Naive thymus-derived CD4-positive, alpha-beta T cell (primary cell): ENCODE measurements at regions of chr7 and their contacts with region 1.

Region 1: GRCh38 chr7:63008366-63008765 is 990.3 kb upstream of the ZNF722 start:
- DNase-seq: no peak
- ATAC-seq: no peak
- H3K4me3 ChIP-seq: no peak overlapping the region
- H3K4me3 Mint-ChIP-seq: no peak overlapping the region
- H3K27ac ChIP-seq: no peak overlapping the region
- H3K27ac Mint-ChIP-seq: no peak overlapping the region
- H3K4me1 ChIP-seq: no peaks in the 10 kb centered on the region
- H3K4me1 Mint-ChIP-seq: no peaks in the 10 kb centered on the region
- H3K27me3 ChIP-seq: no peaks in the 10 kb centered on the region
- H3K27me3 Mint-ChIP-seq: no peaks in the 10 kb centered on the region

Region 2: GRCh38 chr7:64618785-64619456 is 1610.6 kb after region 1 on chr7:
- CTCF ChIA-PET with region 1: no interaction called
- POLR2A ChIA-PET with region 1: no interaction called
- intact Hi-C with region 1: loop called (anchors 2 to 10 kb)
- DNase-seq: peak in 7 of 9 donors; percentile 5 to 60 (median 40)
- ATAC-seq: no peak
- H3K4me3 ChIP-seq: no peak overlapping the region
- H3K4me3 Mint-ChIP-seq: peak overlapping the region in 1 of 10 donors; percentile 1
- H3K27ac ChIP-seq: no peak overlapping the region
- H3K27ac Mint-ChIP-seq: no peak overlapping the region
- H3K4me1 ChIP-seq: no peaks in the 10 kb centered on the region
- H3K4me1 Mint-ChIP-seq: peaks cover 0 to 4% (median 0%) of the 10 kb centered on the region in 7 donors
- H3K27me3 ChIP-seq: no peaks in the 10 kb centered on the region
- H3K27me3 Mint-ChIP-seq: no peaks in the 10 kb centered on the region